Panc1 (cell line): ENCODE measurements at regions of chr9 and their contacts with region 1.

Region 1: GRCh38 chr9:33524306-33524947 is 376 bp downstream of the ANKRD18B start:
- DNase-seq: no peak
- ATAC-seq: peak; percentile 44
- H3K4me3 ChIP-seq: peak overlapping the region; percentile 46 to 53
- H3K27ac ChIP-seq: peak overlapping the region; percentile 23; the same call in 1 of the 2 replicates
- H3K4me1 ChIP-seq: no peaks in the 10 kb centered on the region
- H3K27me3 ChIP-seq: no peaks in the 10 kb centered on the region; the same call in 1 of the 2 replicates
- CTCF ChIP-seq: no peak

Region 2: DNA sequence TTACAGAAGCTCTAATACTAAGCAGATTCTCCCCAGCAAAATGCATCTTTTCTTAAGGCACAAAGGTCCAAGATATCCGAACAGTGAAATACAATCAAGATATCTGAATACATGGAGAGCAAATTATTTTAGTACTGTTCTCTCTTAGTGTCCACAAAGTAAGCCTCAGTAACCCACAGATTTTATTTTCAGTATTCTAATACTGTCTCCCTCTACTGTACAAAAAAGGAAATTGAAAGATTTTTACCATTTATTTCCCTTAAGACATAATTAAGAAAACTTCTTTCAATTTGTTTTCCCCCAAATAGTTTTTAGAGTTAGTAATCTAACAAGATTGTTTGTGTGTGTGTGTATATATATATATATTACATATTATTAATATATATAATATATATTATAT is 26.0 kb before region 1 on chr9:
- CTCF ChIA-PET with region 1: no interaction called
- POLR2A ChIA-PET with region 1: no interaction called
- in situ Hi-C with region 1: no loop called
- intact Hi-C with region 1: no loop called
- DNase-seq: no peak
- ATAC-seq: no peak
- H3K4me3 ChIP-seq: no peak overlapping the region
- H3K27ac ChIP-seq: no peak overlapping the region
- H3K4me1 ChIP-seq: no peaks in the 10 kb centered on the region
- H3K27me3 ChIP-seq: no peaks in the 10 kb centered on the region
- CTCF ChIP-seq: peak; percentile 36; the same call in 1 of the 2 replicates

Region 3: GRCh38 chr9:33623658-33624586 is 99.5 kb after region 1 on chr9:
- CTCF ChIA-PET with region 1: interaction called, 14 read pairs
- POLR2A ChIA-PET with region 1: no interaction called
- in situ Hi-C with region 1: no loop called
- intact Hi-C with region 1: no loop called
- DNase-seq: peak; percentile 66
- ATAC-seq: peak; percentile 99
- H3K4me3 ChIP-seq: no peak overlapping the region
- H3K27ac ChIP-seq: no peak overlapping the region
- H3K4me1 ChIP-seq: peaks cover 1% of the 10 kb centered on the region; the same call in 1 of the 2 replicates
- H3K27me3 ChIP-seq: peaks cover 8% of the 10 kb centered on the region
- CTCF ChIP-seq: peak; percentile 93

Region 4: DNA sequence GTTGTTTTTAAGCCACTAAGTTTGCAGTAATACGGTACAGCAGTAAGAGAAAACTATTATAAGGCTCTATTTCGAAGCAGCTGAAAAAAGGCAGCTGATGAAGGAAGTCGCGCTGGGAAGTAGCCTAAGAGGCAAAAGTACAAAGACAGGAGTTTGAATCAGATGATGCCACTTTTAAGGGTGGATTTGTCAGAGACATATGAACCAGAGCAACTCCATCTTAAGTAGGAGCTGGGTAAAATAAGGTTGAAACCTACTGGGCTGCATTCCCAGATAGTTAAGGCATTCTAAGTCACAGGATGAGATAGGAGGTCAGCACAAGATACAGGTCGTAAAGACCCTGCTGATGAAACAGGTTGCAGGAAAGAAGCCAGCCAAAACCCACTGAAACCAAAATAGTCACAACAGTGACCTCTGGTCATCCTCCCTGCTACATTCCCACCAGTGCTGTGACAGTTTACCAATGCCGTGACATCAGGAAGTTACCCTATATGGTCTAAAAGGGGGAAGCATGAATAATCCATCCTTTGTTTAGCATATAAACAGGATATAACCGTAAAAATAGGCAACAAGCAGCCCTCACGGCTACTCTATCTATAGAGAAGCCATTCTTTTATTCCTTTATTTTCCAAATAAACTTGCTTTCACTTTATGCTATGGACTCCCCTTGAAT is 179.1 kb after region 1 on chr9:
- CTCF ChIA-PET with region 1: no interaction called
- POLR2A ChIA-PET with region 1: no interaction called
- in situ Hi-C with region 1: no loop called
- intact Hi-C with region 1: no loop called
- DNase-seq: no peak
- ATAC-seq: no peak
- H3K4me3 ChIP-seq: no peak overlapping the region
- H3K27ac ChIP-seq: no peak overlapping the region
- H3K4me1 ChIP-seq: no peaks in the 10 kb centered on the region
- H3K27me3 ChIP-seq: peaks cover 14% of the 10 kb centered on the region
- CTCF ChIP-seq: no peak

Region 5: GRCh38 chr9:33721674-33722358 is 197.4 kb after region 1 on chr9:
- CTCF ChIA-PET with region 1: interaction called, 3 read pairs
- POLR2A ChIA-PET with region 1: no interaction called
- in situ Hi-C with region 1: no loop called
- intact Hi-C with region 1: loop called (anchors 5 kb)
- DNase-seq: peak; percentile 67
- ATAC-seq: peak; percentile 86
- H3K4me3 ChIP-seq: peak overlapping the region in 1 of 2 experiments; percentile 23; a peak in 1 of 4 replicates
- H3K27ac ChIP-seq: no peak overlapping the region
- H3K4me1 ChIP-seq: no peaks in the 10 kb centered on the region
- H3K27me3 ChIP-seq: peaks cover 7% of the 10 kb centered on the region
- CTCF ChIP-seq: peak; percentile 99

Region 6: GRCh38 chr9:34139477-34140146 is 615.2 kb after region 1 on chr9:
- CTCF ChIA-PET with region 1: interaction called, 12 read pairs
- POLR2A ChIA-PET with region 1: no interaction called
- in situ Hi-C with region 1: no loop called
- intact Hi-C with region 1: no loop called
- DNase-seq: no peak
- ATAC-seq: peak; percentile 88
- H3K4me3 ChIP-seq: no peak overlapping the region
- H3K27ac ChIP-seq: no peak overlapping the region
- H3K4me1 ChIP-seq: no peaks in the 10 kb centered on the region
- H3K27me3 ChIP-seq: no peaks in the 10 kb centered on the region
- CTCF ChIP-seq: no peak